A549 (cell line): ENCODE measurements at regions of chr1 and their contacts with region 1.

Region 1: DNA sequence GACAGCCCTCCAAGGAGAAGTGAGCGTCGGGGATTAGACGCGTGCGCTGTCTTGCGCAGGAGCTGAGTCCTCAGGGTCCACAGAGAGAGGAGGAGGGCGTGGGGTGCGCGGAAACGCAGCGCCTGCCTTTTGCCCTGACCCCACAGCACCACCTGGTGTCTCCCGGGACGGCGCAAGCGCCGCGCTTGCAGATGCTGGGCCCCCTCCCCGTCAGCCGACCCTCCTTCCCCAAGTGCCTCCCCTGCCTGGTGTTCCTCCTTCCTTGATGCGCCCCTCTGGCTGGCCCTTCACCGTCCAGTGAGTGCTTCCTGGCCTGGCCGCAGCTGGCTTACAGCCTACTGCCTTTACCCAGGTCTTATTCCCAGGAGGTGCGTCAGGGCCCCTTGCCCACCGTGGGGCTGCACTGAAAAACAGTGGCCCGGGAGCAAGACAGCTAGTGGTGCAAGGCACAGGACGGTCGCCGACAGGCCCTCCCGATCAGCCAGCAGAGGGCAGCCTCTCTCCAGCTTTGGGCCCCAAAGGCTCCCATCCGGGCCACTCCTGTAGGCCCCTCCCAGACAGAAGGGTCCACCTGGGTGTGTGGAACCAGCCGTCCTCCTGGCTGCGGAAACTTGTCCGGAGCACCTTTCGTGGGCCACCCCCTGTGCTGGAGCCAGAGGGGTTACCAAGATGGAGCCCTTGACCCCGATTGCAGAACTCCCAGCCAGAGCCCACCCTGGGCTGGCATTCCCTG is 12.9 kb upstream of the PHLDA3 start:
- DNase-seq: peak; percentile 86 to 92
- ATAC-seq: peak; percentile 55 to 83
- H3K4me3 ChIP-seq: no peak overlapping the region
- H3K27ac ChIP-seq: peak overlapping the region; percentile 77 to 86
- H3K4me1 ChIP-seq: peaks cover 50% of the 10 kb centered on the region
- CTCF ChIP-seq: peak; percentile 93
- EP300 ChIP-seq: no peak
- POLR2A ChIP-seq: no peak
- RAD21 ChIP-seq: peak; percentile 97 to 98

Region 2: GRCh38 chr1:201408176-201408833 is 73.6 kb before region 1 on chr1:
- CTCF ChIA-PET with region 1: interaction called, 12 read pairs
- POLR2A ChIA-PET with region 1: no interaction called
- DNase-seq: peak; percentile 80 to 93
- ATAC-seq: peak; percentile 74 to 91
- H3K4me3 ChIP-seq: no peak overlapping the region
- H3K27ac ChIP-seq: peak overlapping the region; percentile 82 to 92
- H3K4me1 ChIP-seq: peaks cover 57% of the 10 kb centered on the region
- CTCF ChIP-seq: peak; percentile 95
- EP300 ChIP-seq: no peak
- POLR2A ChIP-seq: no peak
- RAD21 ChIP-seq: peak; percentile 88

Region 3: GRCh38 chr1:201456499-201457309 is 25.2 kb before region 1 on chr1:
- CTCF ChIA-PET with region 1: interaction called, 318 read pairs
- POLR2A ChIA-PET with region 1: interaction called, 17 read pairs
- DNase-seq: peak in 1 of 2 experiments; percentile 84
- ATAC-seq: peak; percentile 45 to 61
- H3K4me3 ChIP-seq: no peak overlapping the region
- H3K27ac ChIP-seq: peak overlapping the region; percentile 78 to 88
- H3K4me1 ChIP-seq: peaks cover 51% of the 10 kb centered on the region
- CTCF ChIP-seq: no peak
- EP300 ChIP-seq: peak in 1 of 2 experiments; percentile 17; a peak in 1 of 5 replicates
- POLR2A ChIP-seq: no peak
- RAD21 ChIP-seq: no peak

Region 4: GRCh38 chr1:201468844-201469511 is 12.9 kb before region 1 on chr1 and contains the start of gene PHLDA3:
- CTCF ChIA-PET with region 1: interaction called, 188 read pairs
- POLR2A ChIA-PET with region 1: interaction called, 28 read pairs
- DNase-seq: peak; percentile 77 to 78
- ATAC-seq: peak; percentile 81 to 87
- H3K4me3 ChIP-seq: peak within 1 kb of the TSS; percentile 80
- H3K27ac ChIP-seq: peak within 1 kb of the TSS; percentile 93 to 99
- H3K4me1 ChIP-seq: peaks cover 50% of the 10 kb centered on the region
- CTCF ChIP-seq: peak; percentile 8; the same call in 1 of the 3 replicates
- EP300 ChIP-seq: no peak
- POLR2A ChIP-seq: peak; percentile 85
- RAD21 ChIP-seq: peak in 1 of 2 experiments; percentile 24; a peak in 2 of 5 replicates
- polyA plus RNA-seq, gene PHLDA3: 34.3 and 40.5 TPM in 2 replicates

Region 5: GRCh38 chr1:201506556-201507359 is 24.8 kb after region 1 on chr1 and contains the start of gene CSRP1:
- CTCF ChIA-PET with region 1: interaction called, 1,452 read pairs
- POLR2A ChIA-PET with region 1: interaction called, 32 read pairs
- DNase-seq: peak; percentile 88 to 98
- ATAC-seq: peak; percentile 82 to 85
- H3K4me3 ChIP-seq: peak within 1 kb of the TSS; percentile 66
- H3K27ac ChIP-seq: peak within 1 kb of the TSS; percentile 87 to 96
- H3K4me1 ChIP-seq: peaks cover 62% of the 10 kb centered on the region
- CTCF ChIP-seq: no peak; the same call in 2 of the 3 replicates
- EP300 ChIP-seq: no peak
- POLR2A ChIP-seq: peak; percentile 92
- RAD21 ChIP-seq: no peak; a peak in 1 of 5 replicates
- polyA plus RNA-seq, gene CSRP1: 256 and 277 TPM in 2 replicates

Region 6: GRCh38 chr1:201545851-201546492 is 64.0 kb after region 1 on chr1:
- CTCF ChIA-PET with region 1: interaction called, 11 read pairs
- POLR2A ChIA-PET with region 1: no interaction called
- DNase-seq: peak; percentile 47 to 55
- ATAC-seq: peak; percentile 96 to 98
- H3K4me3 ChIP-seq: no peak overlapping the region
- H3K27ac ChIP-seq: peak overlapping the region in 1 of 2 experiments; percentile 70; a peak in 3 of 6 replicates
- H3K4me1 ChIP-seq: peaks cover 6% of the 10 kb centered on the region; the same call in 1 of the 3 replicates
- CTCF ChIP-seq: no peak; the same call in none of the 3 replicates
- EP300 ChIP-seq: no peak
- POLR2A ChIP-seq: no peak
- RAD21 ChIP-seq: no peak